ENCODE measurements at regions of chr5 and their contacts with region 1.

Region 1: GRCh38 chr5:54793468-54794134 is 191.8 kb downstream of the ESM1 start:
- DNase-seq: no peak
- H3K4me3 Mint-ChIP-seq: no peak overlapping the region
- H3K27ac Mint-ChIP-seq: peak overlapping the region; percentile 38
- H3K4me1 Mint-ChIP-seq: peaks cover 18% of the 10 kb centered on the region
- H3K27me3 Mint-ChIP-seq: peaks cover 8% of the 10 kb centered on the region

Region 2: DNA sequence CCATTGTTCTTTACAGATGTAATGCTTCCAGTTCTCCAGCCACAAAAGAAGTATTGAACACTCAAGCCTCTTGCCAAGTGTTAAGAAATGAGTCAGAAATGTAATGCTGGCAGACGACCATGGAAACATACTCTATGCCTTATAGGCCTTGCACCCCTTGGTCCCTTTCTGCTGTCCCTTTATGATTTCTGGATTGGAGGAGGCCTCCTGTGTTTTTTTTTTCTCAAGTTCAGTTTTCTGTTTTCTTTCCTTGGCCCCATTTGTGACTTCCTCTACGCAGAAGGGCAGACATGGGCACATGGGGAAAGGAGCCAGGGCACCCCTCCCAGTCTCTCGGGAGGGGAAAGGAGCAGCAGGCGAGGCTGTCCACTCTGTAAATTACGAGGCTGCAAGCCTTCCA is 222.7 kb before region 1 on chr5:
- CTCF ChIA-PET with region 1: no interaction called
- POLR2A ChIA-PET with region 1: no interaction called
- intact Hi-C with region 1: no loop called
- DNase-seq: no peak
- H3K4me3 Mint-ChIP-seq: no peak overlapping the region
- H3K27ac Mint-ChIP-seq: no peak overlapping the region
- H3K4me1 Mint-ChIP-seq: peaks cover 9% of the 10 kb centered on the region
- H3K27me3 Mint-ChIP-seq: no peaks in the 10 kb centered on the region

Region 3: GRCh38 chr5:54610197-54610944 is 183.2 kb before region 1 on chr5:
- CTCF ChIA-PET with region 1: no interaction called
- POLR2A ChIA-PET with region 1: interaction called, 5 read pairs
- intact Hi-C with region 1: loop called (anchors 1 kb)
- DNase-seq: peak; percentile 32
- H3K4me3 Mint-ChIP-seq: no peak overlapping the region
- H3K27ac Mint-ChIP-seq: peak overlapping the region; percentile 29
- H3K4me1 Mint-ChIP-seq: peaks cover 21% of the 10 kb centered on the region
- H3K27me3 Mint-ChIP-seq: no peaks in the 10 kb centered on the region